CD4-positive, alpha-beta T cell (primary cell): ENCODE measurements at regions of chr3 and their contacts with region 1.

Region 1: GRCh38 chr3:11651900-11652299 is 8.2 kb upstream of the VGLL4 start:
- DNase-seq: peak in 3 of 14 experiments; percentile 57 to 69 (median 65)
- ATAC-seq: no peak
- H3K4me3 ChIP-seq: no peak overlapping the region
- H3K4me3 Mint-ChIP-seq: no peak overlapping the region
- H3K27ac ChIP-seq: no peak overlapping the region
- H3K27ac Mint-ChIP-seq: no peak overlapping the region
- H3K4me1 ChIP-seq: peaks cover 3% of the 10 kb centered on the region
- H3K4me1 Mint-ChIP-seq: peaks cover 4% of the 10 kb centered on the region
- H3K27me3 ChIP-seq: no peaks in the 10 kb centered on the region
- H3K27me3 Mint-ChIP-seq: no peaks in the 10 kb centered on the region
- CTCF ChIP-seq: peak; percentile 77

Region 2: DNA sequence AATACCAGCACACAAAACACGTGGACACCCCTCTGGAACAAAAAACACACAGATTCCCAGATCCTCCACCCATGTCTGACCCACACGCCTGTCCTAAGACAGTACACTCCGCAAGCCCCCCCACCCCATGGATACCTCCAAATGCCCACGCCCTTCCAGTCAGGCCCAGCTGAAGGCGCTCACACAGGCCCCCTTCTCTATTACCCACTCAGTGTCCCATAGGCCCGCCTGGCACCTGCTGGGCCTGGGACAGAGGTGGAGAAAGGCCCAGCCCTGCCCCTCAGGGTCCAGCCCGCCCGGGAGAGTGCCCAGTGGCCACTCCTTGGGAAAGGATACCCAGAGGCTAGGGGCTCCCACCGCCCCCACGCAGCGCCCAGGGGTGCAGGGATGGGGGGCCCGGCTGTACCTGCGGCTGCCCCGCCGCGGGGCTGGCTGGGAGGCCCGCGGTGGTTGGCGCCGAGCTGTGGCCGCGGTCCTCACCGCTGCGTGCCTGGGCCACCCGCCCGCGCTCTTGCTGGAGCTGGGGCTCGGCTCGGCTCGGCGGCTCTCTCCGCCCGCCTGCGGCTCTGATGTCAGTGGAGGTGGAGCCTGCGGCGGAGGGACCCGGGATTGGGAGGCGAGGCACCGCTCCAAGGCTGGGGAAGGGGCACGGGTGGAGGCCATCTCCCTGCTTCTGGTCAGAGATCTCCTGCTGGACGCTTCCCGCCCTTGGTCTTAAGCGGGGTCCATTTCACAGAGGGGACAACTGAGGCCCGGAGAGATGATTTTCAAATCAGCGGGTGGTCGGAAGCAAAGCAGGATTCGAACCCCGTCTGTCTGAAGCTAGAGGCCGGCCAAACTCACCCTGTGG is 1882.2 kb before region 1 on chr3 and contains the start of gene CAMK1:
- CTCF ChIA-PET with region 1: no interaction called
- POLR2A ChIA-PET with region 1: no interaction called
- intact Hi-C with region 1: no loop called
- DNase-seq: peak; percentile 28 to 71 (median 48)
- ATAC-seq: peak; percentile 97
- H3K4me3 ChIP-seq: peak within 1 kb of the TSS; percentile 53
- H3K4me3 Mint-ChIP-seq: peak within 1 kb of the TSS; percentile 35
- H3K27ac ChIP-seq: no peak within 1 kb of the TSS
- H3K27ac Mint-ChIP-seq: peak within 1 kb of the TSS; percentile 16
- H3K4me1 ChIP-seq: peaks cover 29% of the 10 kb centered on the region
- H3K4me1 Mint-ChIP-seq: peaks cover 18% of the 10 kb centered on the region
- H3K27me3 ChIP-seq: no peaks in the 10 kb centered on the region
- H3K27me3 Mint-ChIP-seq: no peaks in the 10 kb centered on the region
- CTCF ChIP-seq: no peak
- total RNA-seq, gene CAMK1: 0.74 to 1.1 TPM

Region 3: DNA sequence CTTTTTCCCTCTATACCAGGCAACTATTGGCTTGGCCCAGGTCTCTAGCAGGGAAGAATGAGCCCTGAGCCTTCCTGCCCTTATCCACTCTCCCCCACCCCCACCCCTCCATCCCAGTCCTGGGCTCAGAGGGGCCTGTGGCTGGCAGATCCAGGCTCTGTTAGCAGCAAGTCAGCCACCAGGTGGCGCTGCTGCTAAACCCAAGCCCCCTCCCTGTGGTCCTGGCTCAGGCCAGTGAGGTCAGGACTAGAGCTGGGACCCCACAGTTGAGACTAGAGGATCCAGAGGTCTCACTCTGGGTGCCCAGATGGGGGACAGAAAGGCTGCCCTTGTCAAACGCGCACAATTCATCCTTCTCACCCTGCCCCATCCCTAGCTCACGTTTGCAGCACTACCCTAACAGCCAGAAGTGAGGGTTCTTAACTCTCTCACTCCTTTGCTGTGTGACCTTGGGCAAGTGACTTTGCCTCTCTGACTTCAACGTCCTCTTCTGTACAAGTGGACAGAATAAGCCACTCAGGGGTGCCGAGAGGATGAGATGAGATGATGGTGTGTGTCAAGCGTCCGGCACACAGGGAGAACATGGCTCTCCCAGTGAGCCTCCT is 706.1 kb before region 1 on chr3:
- CTCF ChIA-PET with region 1: no interaction called
- POLR2A ChIA-PET with region 1: no interaction called
- intact Hi-C with region 1: loop called in 1 of 2 experiments (anchors 5 kb)
- DNase-seq: peak in 13 of 14 experiments; percentile 7 to 62 (median 25)
- ATAC-seq: no peak
- H3K4me3 ChIP-seq: no peak overlapping the region
- H3K4me3 Mint-ChIP-seq: no peak overlapping the region
- H3K27ac ChIP-seq: no peak overlapping the region
- H3K27ac Mint-ChIP-seq: no peak overlapping the region
- H3K4me1 ChIP-seq: no peaks in the 10 kb centered on the region
- H3K4me1 Mint-ChIP-seq: no peaks in the 10 kb centered on the region
- H3K27me3 ChIP-seq: peaks cover under 1 to 2% of the 10 kb centered on the region in 2 experiments
- H3K27me3 Mint-ChIP-seq: peaks cover 33% of the 10 kb centered on the region
- CTCF ChIP-seq: peak; percentile 66

Region 4: DNA sequence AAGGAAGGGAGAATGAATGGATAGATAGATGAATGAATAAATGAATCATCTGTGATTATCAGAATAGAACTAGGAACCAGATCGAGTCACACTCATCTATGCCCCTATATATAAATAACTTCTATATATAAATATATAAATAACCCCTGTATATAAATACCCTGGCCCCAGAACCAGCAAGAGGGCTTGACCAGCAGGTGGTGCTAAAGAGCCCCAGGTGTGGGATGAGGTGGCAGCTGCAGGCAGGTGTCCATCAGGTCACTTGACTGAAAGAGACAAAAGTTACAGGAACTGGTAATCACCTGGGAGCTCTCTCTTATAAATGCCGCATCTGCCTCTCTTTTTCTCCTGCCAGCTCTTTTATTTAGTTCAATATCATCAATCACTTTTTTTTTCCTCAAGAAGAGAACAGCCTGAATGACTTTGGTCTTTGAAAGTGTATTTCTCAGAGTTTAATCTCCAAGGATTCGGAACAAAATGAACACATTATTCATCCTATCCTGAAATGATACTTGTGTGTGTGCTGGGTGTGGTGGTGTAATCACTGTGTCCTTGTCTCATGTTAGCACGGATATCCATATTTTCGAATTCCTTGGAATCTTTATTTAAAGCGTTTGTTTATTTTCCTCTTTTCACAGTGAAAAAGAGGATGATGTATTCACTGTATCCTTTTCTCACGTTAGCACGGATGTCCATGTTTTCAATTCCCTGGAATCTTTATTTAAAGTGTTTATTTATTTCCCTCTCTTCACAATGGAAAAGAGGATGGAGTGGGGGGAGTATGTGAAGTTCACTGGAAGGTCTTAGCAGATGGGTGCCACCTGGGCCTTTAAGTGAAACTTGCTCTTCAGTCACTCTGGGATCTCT is 415.1 kb before region 1 on chr3:
- CTCF ChIA-PET with region 1: interaction called, 3 read pairs
- POLR2A ChIA-PET with region 1: no interaction called
- intact Hi-C with region 1: loop called (anchors 1 to 2 kb)
- DNase-seq: peak; percentile 68 to 87 (median 74)
- ATAC-seq: peak; percentile 66
- H3K4me3 ChIP-seq: no peak overlapping the region
- H3K4me3 Mint-ChIP-seq: no peak overlapping the region
- H3K27ac ChIP-seq: no peak overlapping the region
- H3K27ac Mint-ChIP-seq: no peak overlapping the region
- H3K4me1 ChIP-seq: no peaks in the 10 kb centered on the region
- H3K4me1 Mint-ChIP-seq: no peaks in the 10 kb centered on the region
- H3K27me3 ChIP-seq: peaks cover 0 to 7% of the 10 kb centered on the region in 2 experiments
- H3K27me3 Mint-ChIP-seq: peaks cover 8% of the 10 kb centered on the region
- CTCF ChIP-seq: peak; percentile 89

Region 5: DNA sequence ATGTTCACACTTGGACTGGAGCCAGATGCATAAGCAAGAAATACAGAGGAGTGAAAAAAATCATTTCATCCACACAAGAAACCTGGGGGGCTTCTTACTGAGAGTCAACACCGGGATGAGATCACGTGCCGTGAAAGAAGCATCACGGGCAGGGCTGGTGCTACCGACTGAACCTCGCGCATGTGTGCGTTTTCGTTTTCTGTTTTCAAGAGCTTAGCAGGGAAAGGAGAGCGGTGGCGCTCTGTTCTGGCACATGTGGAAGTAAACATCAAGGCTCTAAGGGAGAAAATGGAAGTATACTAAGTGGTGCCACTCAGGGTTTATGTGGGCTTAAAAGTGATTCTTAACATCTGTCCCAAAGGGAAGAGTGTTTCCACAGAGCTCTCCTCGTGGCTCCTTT is 64.1 kb before region 1 on chr3:
- CTCF ChIA-PET with region 1: no interaction called
- POLR2A ChIA-PET with region 1: no interaction called
- intact Hi-C with region 1: loop called in 1 of 2 experiments (anchors 5 kb)
- DNase-seq: no peak
- ATAC-seq: no peak
- H3K4me3 ChIP-seq: no peak overlapping the region
- H3K4me3 Mint-ChIP-seq: no peak overlapping the region
- H3K27ac ChIP-seq: no peak overlapping the region
- H3K27ac Mint-ChIP-seq: peak overlapping the region; percentile 54
- H3K4me1 ChIP-seq: peaks cover 10% of the 10 kb centered on the region
- H3K4me1 Mint-ChIP-seq: peaks cover 89% of the 10 kb centered on the region
- H3K27me3 ChIP-seq: no peaks in the 10 kb centered on the region
- H3K27me3 Mint-ChIP-seq: no peaks in the 10 kb centered on the region
- CTCF ChIP-seq: no peak

Region 6: DNA sequence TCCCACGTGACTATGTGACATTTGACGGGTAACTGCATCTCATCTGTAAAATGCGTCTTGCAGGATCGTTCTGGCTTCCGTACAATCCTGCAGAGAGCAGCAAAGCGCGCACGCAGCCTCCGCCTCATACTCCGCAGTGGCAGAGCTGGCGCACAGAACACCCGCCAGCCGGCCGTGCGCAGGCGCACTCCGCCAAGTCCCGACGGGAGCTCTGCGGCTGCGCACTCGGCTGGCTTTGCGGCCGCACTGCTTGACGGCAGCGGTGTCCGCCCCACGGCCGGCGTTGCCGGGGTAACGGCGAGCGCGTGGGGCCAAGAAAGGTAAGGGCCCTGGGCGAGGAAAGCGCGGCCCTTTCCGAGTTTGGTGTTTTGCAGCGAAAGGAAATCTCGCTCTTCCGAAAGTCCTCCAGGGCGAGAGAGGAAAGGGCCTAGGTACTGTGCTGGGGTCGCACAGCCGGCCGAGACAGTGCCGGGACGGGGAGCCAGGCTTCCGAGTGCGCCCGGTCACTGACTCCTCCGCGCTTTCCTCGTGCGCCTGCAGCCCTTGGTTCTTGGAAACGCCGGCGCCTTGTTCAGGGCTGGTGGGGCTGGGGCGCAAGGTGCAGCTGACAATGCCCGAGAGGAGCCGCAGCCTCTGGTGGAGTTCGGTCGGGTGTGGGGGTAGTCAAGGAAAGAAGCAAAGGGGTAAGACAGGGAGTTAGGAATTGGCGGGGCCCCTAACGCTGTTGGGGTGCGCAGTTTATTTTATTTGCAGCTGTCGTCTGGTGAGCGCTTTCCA is 832.5 kb after region 1 on chr3 and contains the start of gene TSEN2:
- CTCF ChIA-PET with region 1: no interaction called
- POLR2A ChIA-PET with region 1: no interaction called
- intact Hi-C with region 1: loop called in 1 of 2 experiments (anchors 5 kb)
- DNase-seq: peak; percentile 92 to 99 (median 96)
- ATAC-seq: peak; percentile 96
- H3K4me3 ChIP-seq: peak within 1 kb of the TSS; percentile 87
- H3K4me3 Mint-ChIP-seq: peak within 1 kb of the TSS; percentile 97
- H3K27ac ChIP-seq: peak within 1 kb of the TSS; percentile 72 to 81
- H3K27ac Mint-ChIP-seq: peak within 1 kb of the TSS; percentile 97
- H3K4me1 ChIP-seq: peaks cover 29% of the 10 kb centered on the region
- H3K4me1 Mint-ChIP-seq: peaks cover 52% of the 10 kb centered on the region
- H3K27me3 ChIP-seq: no peaks in the 10 kb centered on the region
- H3K27me3 Mint-ChIP-seq: no peaks in the 10 kb centered on the region
- CTCF ChIP-seq: no peak
- total RNA-seq, gene TSEN2: 8.0 to 8.2 TPM

Region 7: DNA sequence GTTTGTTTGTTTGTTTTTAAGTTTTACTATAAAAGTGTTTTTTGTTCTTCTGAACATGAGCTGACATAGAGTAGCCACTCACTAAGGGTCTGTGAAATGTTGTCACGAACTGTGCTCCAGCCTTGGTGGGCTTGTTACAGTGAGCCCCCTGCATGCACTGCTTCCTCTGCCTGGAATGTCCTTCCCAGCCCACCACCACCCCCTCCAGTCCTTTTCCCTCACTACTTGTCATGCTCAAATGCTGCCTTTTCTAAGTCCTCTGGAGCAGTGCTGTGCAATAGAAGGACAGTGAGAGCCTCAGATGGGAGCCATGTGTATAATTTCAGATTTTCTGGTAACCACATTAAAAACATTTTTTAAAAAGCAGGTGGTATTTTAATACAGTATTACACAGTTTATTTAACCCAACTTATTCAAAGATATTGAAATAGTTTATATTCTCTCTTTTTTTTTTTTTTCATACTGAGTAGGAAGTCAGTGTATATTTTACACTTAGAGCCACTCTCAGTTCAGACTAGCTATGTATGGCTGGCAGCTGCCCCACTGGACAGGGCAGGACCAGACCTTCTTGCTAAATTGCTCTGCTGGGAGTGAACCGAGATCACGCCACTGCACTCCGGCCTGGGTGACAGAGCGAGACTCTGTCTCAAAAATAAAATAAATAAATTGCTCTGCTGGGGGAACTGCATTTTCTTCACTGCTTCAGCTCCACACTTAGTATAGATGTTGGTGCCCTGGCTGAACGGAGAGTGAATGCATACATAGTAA is 866.5 kb after region 1 on chr3:
- CTCF ChIA-PET with region 1: no interaction called
- POLR2A ChIA-PET with region 1: no interaction called
- intact Hi-C with region 1: no loop called
- DNase-seq: no peak
- ATAC-seq: no peak
- H3K4me3 ChIP-seq: no peak overlapping the region
- H3K4me3 Mint-ChIP-seq: no peak overlapping the region
- H3K27ac ChIP-seq: no peak overlapping the region
- H3K27ac Mint-ChIP-seq: no peak overlapping the region
- H3K4me1 ChIP-seq: no peaks in the 10 kb centered on the region
- H3K4me1 Mint-ChIP-seq: no peaks in the 10 kb centered on the region
- H3K27me3 ChIP-seq: no peaks in the 10 kb centered on the region
- H3K27me3 Mint-ChIP-seq: no peaks in the 10 kb centered on the region
- CTCF ChIP-seq: no peak